ENCODE measurements at regions of chr22 and their contacts with region 1.

Region 1: DNA sequence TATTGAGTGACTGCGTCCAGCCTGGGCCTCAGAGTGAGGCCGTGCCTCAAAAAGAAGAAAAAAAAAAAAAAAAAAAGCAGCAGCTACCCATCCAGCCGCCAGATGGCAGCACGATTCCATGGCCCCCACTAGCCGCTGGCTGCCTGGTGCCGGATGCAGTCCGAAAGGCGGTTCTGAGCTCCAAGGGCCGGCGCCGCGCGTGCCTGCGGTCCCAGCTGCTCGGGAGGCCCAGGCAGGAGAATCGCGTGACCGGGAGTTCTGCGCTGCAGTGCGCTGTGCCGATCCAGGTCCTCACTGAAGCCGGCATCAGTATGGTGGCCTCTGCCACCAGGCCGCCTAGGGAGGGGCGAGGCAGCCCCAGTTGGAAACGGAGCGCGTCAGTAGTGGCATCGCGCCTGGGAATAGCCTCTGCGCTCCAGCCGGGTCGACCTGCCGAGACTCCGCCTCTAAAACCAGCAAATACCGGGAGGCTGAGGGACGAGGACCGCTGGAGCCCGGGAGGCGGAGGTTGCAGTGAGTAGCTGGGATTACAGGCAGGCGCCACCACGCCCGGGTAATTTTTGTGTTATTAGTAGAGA is 19.3 kb downstream of the SCARF2 start:
- DNase-seq: peak; percentile 80
- ATAC-seq: peak; percentile 87
- H3K4me3 Mint-ChIP-seq: peak overlapping the region; percentile 44
- H3K27ac Mint-ChIP-seq: no peak overlapping the region
- H3K4me1 Mint-ChIP-seq: peaks cover 5% of the 10 kb centered on the region
- H3K27me3 Mint-ChIP-seq: peaks cover 2% of the 10 kb centered on the region

Region 2: DNA sequence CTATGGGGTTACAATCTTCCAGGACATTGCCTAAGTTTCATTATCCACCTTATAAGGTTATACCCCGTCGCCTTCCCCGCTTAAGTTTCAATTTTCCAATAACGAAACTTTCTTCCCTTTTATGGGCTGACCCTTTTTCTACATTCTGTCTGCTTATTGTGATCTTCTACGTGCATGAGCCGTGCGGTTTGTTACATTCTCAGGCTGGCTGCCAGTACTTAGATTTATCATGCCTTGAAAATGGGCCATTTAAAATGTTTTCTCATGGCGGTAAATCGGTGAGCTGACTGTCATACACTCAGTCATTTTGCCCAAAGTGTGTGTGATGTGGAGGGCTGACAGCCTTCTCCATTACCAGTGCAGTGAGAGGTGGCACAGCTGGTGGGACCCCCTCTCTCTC is 121.7 kb before region 1 on chr22:
- CTCF ChIA-PET with region 1: no interaction called
- POLR2A ChIA-PET with region 1: no interaction called
- DNase-seq: no peak
- ATAC-seq: no peak
- H3K4me3 Mint-ChIP-seq: no peak overlapping the region
- H3K27ac Mint-ChIP-seq: no peak overlapping the region
- H3K4me1 Mint-ChIP-seq: peaks cover 4% of the 10 kb centered on the region
- H3K27me3 Mint-ChIP-seq: peaks cover 12% of the 10 kb centered on the region

Region 3: GRCh38 chr22:20430720-20431510 is 12.6 kb after region 1 on chr22:
- CTCF ChIA-PET with region 1: interaction called, 18 read pairs
- POLR2A ChIA-PET with region 1: no interaction called
- DNase-seq: peak; percentile 62
- ATAC-seq: peak; percentile 48
- H3K4me3 Mint-ChIP-seq: peak overlapping the region; percentile 52
- H3K27ac Mint-ChIP-seq: no peak overlapping the region
- H3K4me1 Mint-ChIP-seq: peaks cover 19% of the 10 kb centered on the region
- H3K27me3 Mint-ChIP-seq: peaks cover 72% of the 10 kb centered on the region

Region 4: DNA sequence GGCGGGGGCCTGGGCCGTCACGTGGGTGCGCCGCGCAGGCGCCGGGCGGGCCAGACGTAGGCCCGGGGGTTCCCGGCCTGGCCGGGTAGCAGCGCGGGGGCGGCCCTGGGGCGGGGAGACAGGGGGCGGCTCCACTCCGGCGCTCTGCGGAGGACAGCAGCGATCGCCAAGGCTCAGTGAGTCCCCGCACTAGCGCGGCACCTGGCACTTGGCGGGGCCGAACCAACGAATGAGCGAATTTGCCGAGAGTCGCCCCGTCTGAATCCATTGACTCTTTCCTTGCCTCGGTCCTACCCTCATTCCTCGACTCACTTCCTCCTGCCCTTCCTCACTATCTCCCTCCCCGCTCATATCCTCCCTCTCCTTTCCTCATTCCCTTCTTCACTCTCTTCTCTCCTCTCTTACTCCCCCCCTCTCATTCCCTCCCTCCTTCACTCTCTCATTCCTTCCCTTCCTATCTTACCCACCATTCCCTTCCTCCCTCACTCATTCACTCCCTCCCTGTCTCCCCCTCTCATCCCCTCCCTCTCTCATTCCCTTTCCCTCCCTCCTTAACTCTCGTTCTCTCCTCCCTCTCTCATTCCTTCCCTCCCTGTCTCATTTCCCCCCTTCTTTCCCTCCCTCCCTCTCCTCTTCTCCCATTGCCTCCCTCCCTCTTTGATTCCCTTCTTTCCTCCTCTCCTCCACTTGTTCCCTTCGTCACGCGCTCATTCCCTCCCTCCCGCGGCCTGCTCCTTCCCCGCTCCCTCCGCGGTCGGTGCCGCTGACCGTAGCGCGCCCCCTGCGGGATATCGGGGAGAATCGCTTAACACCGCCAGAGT is 77.8 kb after region 1 on chr22:
- CTCF ChIA-PET with region 1: interaction called, 14 read pairs
- POLR2A ChIA-PET with region 1: no interaction called
- DNase-seq: peak; percentile 93
- ATAC-seq: peak; percentile 98
- H3K4me3 Mint-ChIP-seq: peak overlapping the region; percentile 85
- H3K27ac Mint-ChIP-seq: peak overlapping the region; percentile 84
- H3K4me1 Mint-ChIP-seq: peaks cover 28% of the 10 kb centered on the region
- H3K27me3 Mint-ChIP-seq: no peaks in the 10 kb centered on the region

Measured in activated CD8-positive, alpha-beta T cell treated with anti-CD3 and anti-CD28 coated beads, Interleukin-2, amount 10 ng/mL, durations not matched to agents 7 days and 5 days (primary cell).